Activated CD4-positive, alpha-beta T cell treated with anti-CD3 and anti-CD28 coated beads, Interleukin-2, amount 10 ng/mL, durations not matched to agents 24 days and 14 days (primary cell): ENCODE measurements at regions of chr6 and their contacts with region 1.

Region 1: DNA sequence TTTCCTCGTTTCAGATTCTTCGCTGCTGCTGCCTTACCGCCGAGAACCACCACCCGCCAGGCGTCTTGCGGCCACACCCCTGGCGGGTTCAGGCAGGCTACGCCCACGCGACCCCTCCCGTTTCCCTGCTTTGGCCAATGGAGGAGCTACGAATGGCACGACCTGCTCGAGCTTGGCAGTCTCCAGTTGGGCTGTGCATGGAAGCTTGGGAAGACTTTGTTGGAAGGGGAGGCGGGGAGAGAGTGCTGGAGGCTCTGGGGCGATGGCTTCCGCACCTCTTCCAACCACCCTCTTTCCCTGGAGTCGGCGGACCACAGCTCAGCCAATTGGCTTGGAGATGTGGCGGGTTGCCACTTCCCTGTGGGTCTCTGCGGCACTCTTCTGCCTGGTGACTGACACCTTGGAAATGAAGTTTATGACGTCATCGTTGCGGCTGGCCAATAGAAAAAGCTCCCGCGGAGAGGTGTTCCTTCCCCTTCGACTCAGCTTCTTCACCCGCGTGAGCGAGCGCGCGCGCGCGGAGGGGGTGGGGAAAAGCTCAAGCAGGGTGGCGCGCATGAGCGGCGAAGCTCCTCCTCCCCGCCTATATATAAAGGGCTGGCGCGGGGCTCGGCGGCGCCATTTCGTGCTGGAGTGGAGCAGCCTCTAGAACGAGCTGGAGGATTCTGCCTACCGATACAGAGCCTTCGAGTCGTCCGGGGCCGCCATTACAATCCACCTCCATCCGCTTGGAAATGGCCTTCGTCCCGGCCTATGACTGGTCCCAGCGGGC is 3.4 kb downstream of the BRD2 start:
- DNase-seq: peak; percentile 100
- H3K4me3 Mint-ChIP-seq: peak overlapping the region; percentile 94
- H3K27ac Mint-ChIP-seq: peak overlapping the region; percentile 100
- H3K4me1 Mint-ChIP-seq: peaks cover 33% of the 10 kb centered on the region
- H3K27me3 Mint-ChIP-seq: no peaks in the 10 kb centered on the region

Region 2: DNA sequence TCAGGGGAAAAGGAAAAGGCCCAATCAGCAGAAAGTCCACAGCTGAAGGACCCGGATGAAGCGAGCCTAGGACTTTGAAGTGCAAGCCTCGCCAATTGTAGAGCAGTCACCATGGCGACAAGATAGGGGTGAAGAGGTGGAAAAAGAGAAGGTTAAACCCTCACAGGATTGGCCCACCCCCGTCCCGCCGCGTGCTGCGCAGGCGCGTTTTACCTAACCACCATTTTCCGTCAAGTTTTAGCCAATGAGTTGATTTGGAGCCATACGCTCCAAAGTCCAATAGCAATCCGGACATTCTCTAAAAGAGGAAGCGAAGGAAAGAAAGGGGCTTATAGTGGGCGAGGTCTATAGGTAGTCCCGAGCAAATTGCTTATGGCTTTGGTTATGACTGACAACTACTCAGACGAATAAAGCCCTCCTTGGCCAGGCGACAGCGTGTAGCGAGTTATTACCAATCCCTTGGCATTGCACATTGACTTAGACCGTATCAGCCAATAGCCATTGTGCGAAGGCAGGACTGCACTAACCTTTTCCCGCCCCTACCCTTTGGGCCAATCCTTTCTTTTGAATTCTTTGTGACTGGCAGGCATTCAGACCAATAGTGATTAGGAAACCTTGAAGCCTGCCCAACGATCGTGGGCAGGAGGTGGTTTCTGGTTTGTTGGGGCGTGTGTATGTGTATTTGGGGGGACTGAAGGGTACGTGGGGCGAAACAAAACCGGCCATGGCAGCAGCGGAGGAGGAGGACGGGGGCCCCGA is 793.8 kb before region 1 on chr6 and contains the start of gene RNF5:
- intact Hi-C with region 1: loop called (anchors 5 kb)
- DNase-seq: peak; percentile 98
- H3K4me3 Mint-ChIP-seq: peak within 1 kb of the TSS; percentile 86
- H3K27ac Mint-ChIP-seq: peak within 1 kb of the TSS; percentile 95
- H3K4me1 Mint-ChIP-seq: peaks cover 59% of the 10 kb centered on the region
- H3K27me3 Mint-ChIP-seq: no peaks in the 10 kb centered on the region
- total RNA-seq, gene RNF5: 59.9 and 62.6 TPM in 2 replicates

Region 3: DNA sequence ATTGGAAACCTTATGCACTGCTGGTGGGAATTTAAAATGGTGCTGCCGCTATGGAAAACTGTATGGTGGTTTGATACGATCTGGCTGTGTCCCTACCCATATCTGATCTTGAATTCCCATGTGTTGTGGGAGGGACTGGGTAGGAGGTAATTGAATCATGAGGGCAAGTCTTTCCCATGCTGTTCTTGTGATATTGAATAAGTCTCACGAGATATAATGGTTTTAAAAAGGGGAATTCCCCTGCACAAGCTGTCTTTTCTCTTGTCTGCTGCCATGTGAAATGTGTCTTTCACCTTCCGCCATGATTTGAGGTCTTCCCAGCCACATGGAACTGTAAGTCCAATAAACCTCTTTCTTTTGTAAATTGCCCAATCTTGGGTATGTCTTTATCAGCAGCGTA is 138.1 kb before region 1 on chr6:
- intact Hi-C with region 1: no loop called
- DNase-seq: peak; percentile 49
- H3K4me3 Mint-ChIP-seq: peak overlapping the region; percentile 56
- H3K27ac Mint-ChIP-seq: peak overlapping the region; percentile 49
- H3K4me1 Mint-ChIP-seq: peaks cover 69% of the 10 kb centered on the region
- H3K27me3 Mint-ChIP-seq: no peaks in the 10 kb centered on the region

Region 4: GRCh38 chr6:32843979-32844838 is 127.6 kb before region 1 on chr6 and contains the start of gene PSMB8:
- intact Hi-C with region 1: loop called (anchors 1 kb)
- DNase-seq: peak; percentile 99
- H3K4me3 Mint-ChIP-seq: peak within 1 kb of the TSS; percentile 99
- H3K27ac Mint-ChIP-seq: peak within 1 kb of the TSS; percentile 99
- H3K4me1 Mint-ChIP-seq: peaks cover 73% of the 10 kb centered on the region
- H3K27me3 Mint-ChIP-seq: no peaks in the 10 kb centered on the region
- total RNA-seq, gene PSMB8: 342 and 353 TPM in 2 replicates

Region 5: GRCh38 chr6:32906539-32906938 is 65.2 kb before region 1 on chr6:
- intact Hi-C with region 1: no loop called
- DNase-seq: no peak
- H3K4me3 Mint-ChIP-seq: no peak overlapping the region
- H3K27ac Mint-ChIP-seq: no peak overlapping the region
- H3K4me1 Mint-ChIP-seq: no peaks in the 10 kb centered on the region
- H3K27me3 Mint-ChIP-seq: peaks cover 14% of the 10 kb centered on the region

Region 6: DNA sequence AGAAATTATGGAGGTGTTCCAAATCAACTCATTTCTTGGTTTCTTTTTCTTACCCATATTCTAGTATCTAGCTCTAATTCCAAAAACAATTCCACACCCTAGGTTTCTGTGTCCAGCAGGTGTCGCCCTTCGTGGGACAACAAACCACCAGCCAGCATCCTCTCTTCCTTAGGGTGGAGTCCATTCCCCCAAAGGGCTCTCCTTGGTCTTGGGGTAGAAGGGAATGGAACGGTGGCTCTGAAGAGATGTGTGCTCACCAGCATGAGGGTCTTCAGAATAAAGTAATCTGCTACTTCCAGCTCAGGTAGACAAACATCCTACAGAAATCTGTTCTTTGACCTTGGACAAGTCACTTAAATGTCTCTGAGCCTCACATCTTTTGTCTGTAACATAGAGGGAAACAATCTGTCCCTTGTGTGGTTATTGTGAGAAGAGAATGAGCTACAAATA is 38.1 kb before region 1 on chr6:
- intact Hi-C with region 1: loop called (anchors 5 kb)
- DNase-seq: peak; percentile 93
- H3K4me3 Mint-ChIP-seq: no peak overlapping the region
- H3K27ac Mint-ChIP-seq: no peak overlapping the region
- H3K4me1 Mint-ChIP-seq: peaks cover 5% of the 10 kb centered on the region
- H3K27me3 Mint-ChIP-seq: peaks cover 26% of the 10 kb centered on the region

Region 7: DNA sequence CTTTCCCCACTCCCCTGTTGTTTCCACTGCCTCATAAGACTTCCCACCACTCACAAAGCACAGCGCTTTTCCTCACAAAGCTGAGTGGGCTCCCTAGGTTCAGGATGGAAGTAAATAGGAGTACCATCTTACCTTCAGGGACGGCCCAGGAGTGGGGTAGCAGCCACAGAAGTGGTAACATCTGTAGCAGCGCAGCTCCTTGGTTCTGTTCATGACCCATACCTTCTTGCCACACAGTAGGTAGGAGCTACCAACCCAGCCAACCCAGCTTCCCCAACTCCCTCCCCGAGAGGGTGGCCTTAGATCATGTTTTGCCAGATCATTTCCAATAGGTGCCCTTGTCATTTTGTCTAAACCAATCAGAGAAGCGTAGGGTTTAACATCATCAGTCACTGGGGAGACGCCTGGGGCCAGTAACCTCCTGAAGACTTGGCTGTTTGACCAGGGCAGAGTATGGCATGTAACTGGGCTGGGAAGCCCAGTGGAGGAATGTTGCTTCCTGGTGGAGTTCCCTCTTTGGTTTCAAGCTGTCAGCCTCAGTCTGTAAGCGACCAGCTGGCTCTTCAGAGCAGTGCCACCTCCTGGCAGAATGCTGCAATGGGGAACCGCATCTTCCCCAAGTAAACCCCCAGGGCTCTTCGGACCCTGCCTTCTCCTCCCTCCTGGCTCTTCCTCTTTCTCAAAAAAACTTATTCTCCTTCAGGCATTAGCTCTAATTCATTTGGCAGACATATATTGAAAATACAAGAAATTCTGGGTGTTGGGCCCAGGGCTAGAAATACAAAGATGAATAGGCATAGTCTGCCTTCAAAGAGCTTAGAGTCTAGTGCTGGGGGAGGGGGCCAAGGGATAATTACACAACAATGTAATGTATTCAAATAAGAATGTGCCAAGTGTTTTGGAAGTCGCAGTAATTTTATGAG is 18.7 kb before region 1 on chr6 and contains the start of gene HLA-DMA:
- intact Hi-C with region 1: loop called (anchors 1 kb)
- DNase-seq: peak; percentile 94
- H3K4me3 Mint-ChIP-seq: peak within 1 kb of the TSS; percentile 84
- H3K27ac Mint-ChIP-seq: peak within 1 kb of the TSS; percentile 77
- H3K4me1 Mint-ChIP-seq: peaks cover 49% of the 10 kb centered on the region
- H3K27me3 Mint-ChIP-seq: no peaks in the 10 kb centered on the region
- total RNA-seq, gene HLA-DMA: 8.1 and 8.7 TPM in 2 replicates

Region 8: DNA sequence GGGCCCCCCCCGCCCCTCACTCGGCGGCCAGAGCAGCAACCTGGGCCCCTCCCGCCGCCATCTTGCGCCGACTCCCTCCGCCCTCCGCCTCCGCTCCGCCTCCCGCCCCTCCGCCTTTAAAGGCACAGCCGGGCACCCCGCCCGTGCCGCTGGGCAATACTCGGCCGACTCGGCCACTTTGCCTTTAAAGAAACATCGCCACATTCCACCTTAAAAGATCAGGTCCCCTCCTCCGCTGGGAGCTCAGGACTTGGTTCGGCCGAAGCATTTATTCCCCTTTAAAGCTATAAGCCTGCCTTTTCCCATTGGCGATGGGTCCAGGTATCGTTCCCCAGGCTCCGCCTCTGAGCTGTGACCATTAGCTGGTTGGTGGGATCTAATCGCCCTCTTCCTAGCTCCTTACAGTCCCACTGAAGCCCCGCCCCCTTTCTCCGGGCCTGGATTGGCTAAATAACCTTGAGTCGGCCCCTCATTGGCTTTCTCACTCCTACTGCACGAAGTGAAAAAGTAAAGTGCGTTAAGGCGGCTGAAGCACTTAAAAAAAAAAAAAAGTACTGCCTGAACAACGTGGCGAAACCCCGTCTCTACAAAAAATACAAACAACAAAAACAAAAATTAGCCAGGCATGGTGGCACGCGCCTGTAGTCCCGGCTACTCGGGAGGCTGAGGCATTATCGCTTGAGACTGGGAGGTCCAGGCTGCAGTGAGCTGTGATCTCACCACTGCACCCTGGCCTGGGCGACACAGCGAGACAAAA is 346.1 kb after region 1 on chr6 and contains the start of gene ZBTB22:
- intact Hi-C with region 1: loop called (anchors 5 kb)
- DNase-seq: peak; percentile 98
- H3K4me3 Mint-ChIP-seq: peak within 1 kb of the TSS; percentile 96
- H3K27ac Mint-ChIP-seq: peak within 1 kb of the TSS; percentile 96
- H3K4me1 Mint-ChIP-seq: peaks cover 53% of the 10 kb centered on the region
- H3K27me3 Mint-ChIP-seq: no peaks in the 10 kb centered on the region
- total RNA-seq, gene ZBTB22: 11.3 and 14.3 TPM in 2 replicates

Region 9: DNA sequence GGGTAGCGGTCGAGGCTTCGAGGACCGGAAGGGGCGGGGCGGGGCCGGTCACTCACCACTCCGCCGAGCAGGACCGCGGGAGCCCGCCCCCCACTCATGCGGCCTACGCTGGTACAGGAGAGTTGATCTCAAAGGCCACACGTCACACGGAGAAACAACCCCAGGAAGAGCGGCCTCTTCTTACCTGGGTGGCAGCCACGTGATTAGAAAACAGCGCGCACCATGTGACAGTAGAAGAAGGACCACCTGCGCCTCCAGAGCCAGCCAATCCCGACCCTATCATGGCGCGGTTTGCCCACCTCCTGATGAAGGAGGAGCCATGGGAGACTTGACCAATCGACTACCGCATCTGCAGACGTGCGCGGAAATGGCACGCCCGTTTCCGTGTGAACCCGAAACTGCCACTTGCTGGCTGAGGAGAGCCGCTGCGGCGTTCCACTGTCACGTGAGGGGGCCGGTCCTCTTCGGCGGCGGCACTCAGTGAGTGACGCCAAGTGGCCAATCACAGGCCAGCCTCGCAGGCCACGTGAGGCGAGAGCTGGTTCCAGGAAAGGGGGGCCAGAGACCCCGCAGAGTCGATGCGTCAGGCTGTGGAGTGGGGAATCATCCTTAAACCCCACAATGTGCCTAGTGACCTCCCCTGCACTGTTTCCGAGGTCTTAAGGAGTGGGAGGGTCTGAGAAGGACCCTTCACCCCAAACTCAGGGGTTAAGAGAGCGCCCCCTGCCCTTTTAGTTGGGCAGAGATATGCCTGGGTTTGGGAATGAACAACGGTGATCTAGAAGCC is 446.3 kb after region 1 on chr6 and contains the start of gene CUTA:
- intact Hi-C with region 1: loop called (anchors 2 kb)
- DNase-seq: peak; percentile 100
- H3K4me3 Mint-ChIP-seq: peak within 1 kb of the TSS; percentile 92
- H3K27ac Mint-ChIP-seq: peak within 1 kb of the TSS; percentile 96
- H3K4me1 Mint-ChIP-seq: peaks cover 63% of the 10 kb centered on the region
- H3K27me3 Mint-ChIP-seq: peaks cover 1% of the 10 kb centered on the region
- total RNA-seq, gene CUTA: 120 and 124 TPM in 2 replicates